ENCODE measurements at regions of chr9 and their contacts with region 1.

Region 1: DNA sequence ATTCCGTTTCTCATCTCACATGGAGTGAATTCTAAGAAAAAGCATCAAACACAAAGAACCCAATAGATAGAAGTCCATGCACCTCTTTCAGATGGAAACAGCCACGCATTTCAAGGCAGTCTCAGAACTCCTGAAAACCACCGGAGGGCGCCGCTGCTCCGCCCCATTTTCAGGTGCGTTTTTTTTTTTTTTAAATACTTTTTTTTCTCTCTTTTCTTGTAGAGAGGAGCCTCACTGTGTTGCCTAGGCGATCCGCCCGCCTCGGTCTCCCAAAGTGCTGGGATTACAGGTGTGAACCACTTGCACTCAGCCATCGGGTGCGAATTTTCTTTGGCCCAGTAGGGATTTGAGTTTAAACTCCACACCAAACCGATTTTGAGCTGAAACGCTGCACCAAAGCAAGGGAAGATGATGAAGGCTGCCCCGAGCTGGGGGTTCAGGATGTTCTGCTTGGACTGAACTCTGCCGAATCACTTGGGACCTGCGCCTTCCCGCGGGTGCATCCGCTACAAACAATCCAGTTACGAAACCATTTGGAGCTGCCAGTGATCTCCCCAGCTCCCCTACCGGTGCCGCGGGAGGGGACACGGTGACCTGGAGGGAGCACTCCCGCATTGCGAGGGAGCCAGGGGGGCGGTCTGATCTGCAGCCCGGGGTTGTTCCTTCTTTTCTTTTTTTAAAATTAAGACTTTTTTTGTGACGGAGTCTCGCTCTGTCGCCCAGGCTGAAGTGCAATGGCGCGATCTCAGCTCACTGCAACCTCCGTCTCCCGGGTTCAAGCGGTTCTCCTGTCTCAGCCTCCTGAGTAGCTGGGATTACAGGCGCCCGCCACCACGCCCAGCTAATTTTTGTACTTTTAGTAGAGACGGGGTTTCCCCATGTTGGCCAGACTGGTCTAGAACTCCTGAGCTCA is 1.4 kb downstream of the PTGR1 start:
- DNase-seq: peak; percentile 19
- H3K4me3 ChIP-seq: peak overlapping the region; percentile 71
- H3K27me3 ChIP-seq: no peaks in the 10 kb centered on the region
- CTCF ChIP-seq: peak; percentile 75

Region 2: GRCh38 chr9:111691672-111692329 is 93.7 kb after region 1 on chr9:
- CTCF ChIA-PET with region 1: interaction called, 17 read pairs
- POLR2A ChIA-PET with region 1: no interaction called
- DNase-seq: peak; percentile 16
- H3K4me3 ChIP-seq: no peak overlapping the region
- H3K27me3 ChIP-seq: no peaks in the 10 kb centered on the region
- CTCF ChIP-seq: peak; percentile 53